WTC11 (cell line): ENCODE measurements at regions of chr12 and their contacts with region 1.

Region 1: DNA sequence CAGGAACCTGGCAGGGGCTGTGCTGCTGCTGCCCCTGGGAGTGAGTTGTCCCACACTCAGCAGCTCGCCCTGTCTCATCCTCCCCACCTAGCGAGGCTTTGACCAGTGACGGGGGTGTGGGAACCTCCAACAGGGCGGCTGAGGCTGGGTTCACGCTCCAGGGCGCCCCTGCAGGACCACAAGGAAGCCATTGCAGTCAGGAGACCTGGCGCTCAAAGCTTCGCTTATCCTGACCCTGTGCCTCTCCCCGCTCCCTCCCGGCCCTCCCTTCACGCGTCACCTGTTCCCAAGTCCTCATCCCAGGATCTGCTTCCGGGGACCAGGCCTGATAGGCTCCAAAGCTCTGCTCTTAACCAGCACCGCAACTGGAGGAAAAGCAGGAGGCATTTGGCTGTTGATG is 272.0 kb upstream of the SFSWAP start:
- DNase-seq: peak; percentile 62
- ATAC-seq: peak; percentile 67
- H3K4me3 Mint-ChIP-seq: no peak overlapping the region
- H3K27ac Mint-ChIP-seq: no peak overlapping the region
- H3K4me1 Mint-ChIP-seq: peaks cover 26% of the 10 kb centered on the region
- H3K27me3 Mint-ChIP-seq: no peaks in the 10 kb centered on the region
- CTCF ChIP-seq: no peak

Region 2: GRCh38 chr12:131229426-131230339 is 209.2 kb before region 1 on chr12:
- CTCF ChIA-PET with region 1: interaction called, 21 read pairs
- POLR2A ChIA-PET with region 1: no interaction called
- DNase-seq: peak; percentile 60
- ATAC-seq: peak; percentile 79
- H3K4me3 Mint-ChIP-seq: peak overlapping the region; percentile 36
- H3K27ac Mint-ChIP-seq: peak overlapping the region; percentile 95
- H3K4me1 Mint-ChIP-seq: peaks cover 34% of the 10 kb centered on the region
- H3K27me3 Mint-ChIP-seq: no peaks in the 10 kb centered on the region; the same call in 1 of the 2 replicates
- CTCF ChIP-seq: no peak

Region 3: DNA sequence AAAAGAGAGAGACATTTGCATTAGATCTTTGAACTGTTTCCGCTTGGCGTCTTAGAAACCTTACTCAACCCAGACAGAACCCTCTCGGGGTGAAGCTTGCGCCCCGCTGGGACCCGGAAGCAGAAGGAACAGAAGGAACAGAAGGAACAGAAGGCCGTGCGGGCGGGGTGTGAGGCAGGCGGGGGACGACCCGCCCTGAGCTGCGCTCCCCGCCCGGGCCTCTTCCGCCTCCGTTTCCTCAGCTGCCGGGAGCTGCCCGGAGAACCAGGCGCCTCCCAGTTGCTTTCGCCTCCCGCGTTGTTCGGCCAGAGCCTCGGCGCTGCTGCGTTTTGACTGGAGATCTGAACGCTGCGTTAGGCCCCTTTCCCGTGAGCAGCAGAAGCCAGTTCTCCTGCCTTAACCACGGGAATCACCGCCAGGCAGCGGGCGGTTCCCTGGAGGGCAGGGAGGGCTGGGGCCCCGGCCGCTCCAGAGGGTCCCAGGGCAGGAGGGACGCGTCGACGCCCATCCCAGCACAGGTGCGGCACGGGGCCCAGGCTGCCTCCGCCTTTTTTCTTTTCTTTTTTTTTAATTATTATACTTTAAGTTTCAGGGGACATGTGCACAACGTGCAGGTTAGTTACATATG is 370.0 kb after region 1 on chr12:
- CTCF ChIA-PET with region 1: no interaction called
- POLR2A ChIA-PET with region 1: no interaction called
- DNase-seq: no peak
- ATAC-seq: no peak
- H3K4me3 Mint-ChIP-seq: no peak overlapping the region
- H3K27ac Mint-ChIP-seq: no peak overlapping the region
- H3K4me1 Mint-ChIP-seq: peaks cover 9% of the 10 kb centered on the region
- H3K27me3 Mint-ChIP-seq: no peaks in the 10 kb centered on the region
- CTCF ChIP-seq: no peak